ENCODE measurements at regions of chr19 and their contacts with region 1.

Region 1: GRCh38 chr19:44770550-44771257 is 7.0 kb upstream of the CBLC start:
- DNase-seq: peak; percentile 96
- ATAC-seq: peak; percentile 96
- H3K4me3 Mint-ChIP-seq: peak overlapping the region; percentile 76
- H3K27ac Mint-ChIP-seq: peak overlapping the region; percentile 85
- H3K4me1 Mint-ChIP-seq: peaks cover 31% of the 10 kb centered on the region
- H3K27me3 Mint-ChIP-seq: peaks cover 6% of the 10 kb centered on the region

Region 2: GRCh38 chr19:44723952-44724319 is 46.8 kb before region 1 on chr19:
- POLR2A ChIA-PET with region 1: interaction called, 53 read pairs
- DNase-seq: peak; percentile 85
- ATAC-seq: peak; percentile 85
- H3K4me3 Mint-ChIP-seq: no peak overlapping the region
- H3K27ac Mint-ChIP-seq: no peak overlapping the region
- H3K4me1 Mint-ChIP-seq: peaks cover 35% of the 10 kb centered on the region
- H3K27me3 Mint-ChIP-seq: peaks cover 4% of the 10 kb centered on the region

Region 3: DNA sequence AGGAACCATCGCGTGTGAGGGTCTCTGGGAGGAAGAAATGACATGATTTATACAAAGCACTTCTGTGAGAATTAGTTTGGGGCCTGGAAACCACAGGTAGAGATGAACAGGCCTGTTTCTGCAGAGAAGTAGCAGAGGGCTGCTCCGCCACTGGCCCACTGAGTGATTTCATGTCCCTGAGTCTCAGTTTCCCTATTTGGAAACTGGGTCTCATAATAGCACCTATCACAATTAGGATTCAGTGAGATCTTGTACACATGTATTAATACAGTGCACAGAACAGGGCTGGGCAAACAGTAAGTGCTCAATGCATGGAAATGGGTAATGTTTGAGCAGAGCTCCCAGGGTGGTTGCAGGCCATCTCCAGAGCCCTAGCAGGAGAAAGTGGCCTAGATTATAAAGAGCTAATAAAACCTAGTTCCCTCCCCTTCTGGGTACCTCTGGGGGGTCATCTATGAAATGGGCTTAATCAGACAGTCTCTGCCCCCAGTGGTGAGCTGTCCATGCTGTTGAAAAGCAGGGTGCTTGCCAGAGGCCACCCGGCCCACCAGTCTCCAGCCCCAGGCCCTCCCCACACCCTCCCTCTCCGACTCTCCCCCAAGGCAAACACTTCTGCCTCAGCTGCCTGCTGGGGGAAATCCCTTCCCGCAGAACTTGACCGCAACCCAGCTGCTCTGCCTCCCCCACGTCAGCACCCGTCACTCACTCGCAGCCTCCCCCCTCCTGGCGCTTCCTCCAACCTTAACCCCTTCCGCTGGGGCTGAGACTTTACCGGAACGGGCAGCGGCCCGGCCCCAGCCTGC is 17.7 kb before region 1 on chr19:
- POLR2A ChIA-PET with region 1: interaction called, 27 read pairs
- DNase-seq: peak; percentile 92
- ATAC-seq: peak; percentile 79
- H3K4me3 Mint-ChIP-seq: peak overlapping the region; percentile 88
- H3K27ac Mint-ChIP-seq: peak overlapping the region; percentile 97
- H3K4me1 Mint-ChIP-seq: peaks cover 58% of the 10 kb centered on the region
- H3K27me3 Mint-ChIP-seq: no peaks in the 10 kb centered on the region

Region 4: DNA sequence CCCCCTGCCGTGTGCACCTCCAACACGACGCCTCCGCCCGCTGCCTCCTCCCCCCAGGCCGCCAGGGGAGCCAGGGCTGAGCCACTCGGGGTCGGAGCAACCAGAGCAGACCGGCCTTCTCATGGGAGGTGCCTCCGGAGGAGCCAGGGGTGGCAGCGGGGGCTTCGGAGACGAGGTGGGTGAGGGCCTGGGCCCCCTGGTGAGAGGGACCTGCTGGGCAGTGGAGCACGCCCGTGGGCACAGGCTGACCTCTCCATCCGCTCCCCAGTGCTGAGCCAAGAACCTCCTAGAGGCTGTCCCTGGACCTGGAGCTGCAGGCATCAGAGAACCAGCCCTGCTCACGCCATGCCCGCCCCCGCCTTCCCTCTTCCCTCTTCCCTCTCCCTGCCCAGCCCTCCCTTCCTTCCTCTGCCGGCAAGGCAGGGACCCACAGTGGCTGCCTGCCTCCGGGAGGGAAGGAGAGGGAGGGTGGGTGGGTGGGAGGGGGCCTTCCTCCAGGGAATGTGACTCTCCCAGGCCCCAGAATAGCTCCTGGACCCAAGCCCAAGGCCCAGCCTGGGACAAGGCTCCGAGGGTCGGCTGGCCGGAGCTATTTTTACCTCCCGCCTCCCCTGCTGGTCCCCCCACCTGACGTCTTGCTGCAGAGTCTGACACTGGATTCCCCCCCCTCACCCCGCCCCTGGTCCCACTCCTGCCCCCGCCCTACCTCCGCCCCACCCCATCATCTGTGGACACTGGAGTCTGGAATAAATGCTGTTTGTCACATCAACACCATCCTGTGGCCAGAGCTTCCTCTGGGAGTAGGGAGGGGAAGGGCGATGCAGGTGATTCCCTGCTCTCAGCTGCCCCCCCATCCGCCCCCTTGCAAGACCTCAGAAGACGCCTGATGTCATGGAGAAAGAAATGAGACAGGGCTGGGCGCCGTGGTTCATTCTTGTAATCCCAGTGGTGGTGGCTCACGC is 50.2 kb after region 1 on chr19:
- POLR2A ChIA-PET with region 1: no interaction called
- DNase-seq: no peak
- ATAC-seq: no peak
- H3K4me3 Mint-ChIP-seq: no peak overlapping the region
- H3K27ac Mint-ChIP-seq: no peak overlapping the region
- H3K4me1 Mint-ChIP-seq: no peaks in the 10 kb centered on the region
- H3K27me3 Mint-ChIP-seq: peaks cover 7% of the 10 kb centered on the region